ENCODE measurements at regions of chr15 and their contacts with region 1.

Region 1: DNA sequence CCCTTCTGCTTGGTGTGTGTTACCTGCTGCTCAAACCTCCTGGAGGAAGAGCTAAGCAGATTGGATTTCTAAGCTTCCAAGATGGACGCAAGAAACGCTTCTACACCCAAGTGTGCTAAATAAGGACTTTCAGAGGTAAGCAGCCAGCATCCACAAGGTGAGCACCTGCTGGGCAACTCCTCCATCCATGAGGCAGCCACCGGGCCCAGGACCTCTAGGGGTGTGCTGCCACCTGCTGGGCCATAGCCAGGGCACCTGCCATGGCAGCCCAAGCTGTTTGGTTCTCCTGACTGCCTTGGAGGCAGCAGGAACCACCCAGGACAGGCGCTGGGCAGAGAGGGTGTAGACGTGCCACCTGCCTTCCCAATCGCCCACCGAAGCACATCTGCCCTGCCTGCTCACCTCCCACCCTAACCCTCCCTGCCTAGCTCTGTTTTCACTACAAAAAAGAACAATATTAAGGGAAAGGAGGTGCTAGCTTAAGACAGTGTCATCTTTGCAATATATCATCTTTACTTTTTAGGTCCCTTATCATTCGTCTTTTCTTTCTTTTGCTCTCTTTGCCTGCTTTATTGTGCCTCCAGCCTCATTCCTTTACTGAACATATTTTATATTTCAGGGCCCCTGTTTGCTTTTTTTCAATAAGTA is 12.9 kb downstream of the C15orf62 start:
- DNase-seq: peak; percentile 68
- ATAC-seq: peak; percentile 79
- H3K4me3 ChIP-seq: no peak overlapping the region
- H3K27ac ChIP-seq: no peak overlapping the region
- H3K4me1 ChIP-seq: peaks cover 31 to 46% of the 10 kb centered on the region in 2 experiments
- H3K27me3 ChIP-seq: no peaks in the 10 kb centered on the region
- CTCF ChIP-seq: peak; percentile 88 to 95 (median 92)
- POLR2A ChIP-seq: no peak
- RAD21 ChIP-seq: peak; percentile 95

Region 2: DNA sequence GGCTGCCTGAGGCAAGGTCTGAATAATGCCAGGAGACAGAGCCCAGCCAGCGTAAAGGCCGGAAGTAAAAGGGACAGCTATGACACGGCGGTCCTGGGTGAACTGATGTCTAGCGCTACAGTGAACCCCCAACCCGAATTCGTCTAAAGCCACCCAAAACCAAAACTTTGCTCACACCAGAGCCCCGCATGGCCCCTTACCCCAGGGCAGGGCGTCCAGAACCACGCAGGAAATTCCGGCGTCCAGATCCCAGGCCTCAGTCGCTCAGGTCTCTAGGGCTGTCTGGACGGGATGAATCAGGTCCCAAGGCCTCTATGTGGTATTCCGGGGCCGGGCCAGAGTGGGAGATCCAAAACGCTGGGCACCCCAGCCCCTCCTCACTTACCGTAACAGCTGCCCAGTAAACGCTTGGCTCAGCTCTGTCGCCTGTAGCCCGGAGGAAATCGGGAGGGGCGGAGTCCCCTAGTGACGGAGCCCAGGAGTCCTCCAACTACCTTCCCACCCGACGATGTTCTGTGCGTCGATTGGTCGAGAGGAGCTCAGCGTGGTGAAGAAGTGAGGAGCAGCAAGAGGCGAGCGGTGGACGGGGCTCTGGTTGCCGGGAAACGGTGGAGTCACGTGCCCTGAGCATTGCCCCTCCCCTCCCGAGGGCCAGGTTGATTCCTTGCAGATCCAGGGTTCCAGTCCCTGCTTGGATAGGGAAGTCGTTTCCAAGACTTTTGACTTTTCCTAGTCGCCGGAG is 217.9 kb before region 1 on chr15 and contains the start of gene CCDC32:
- CTCF ChIA-PET with region 1: interaction called, 7 read pairs
- POLR2A ChIA-PET with region 1: no interaction called
- RAD21 ChIA-PET with region 1: no interaction called
- intact Hi-C with region 1: loop called (anchors 1 kb)
- DNase-seq: peak; percentile 97
- ATAC-seq: peak; percentile 94
- H3K4me3 ChIP-seq: peak within 1 kb of the TSS; percentile 85 to 87
- H3K27ac ChIP-seq: peak within 1 kb of the TSS; percentile 76
- H3K4me1 ChIP-seq: peaks cover 4 to 35% of the 10 kb centered on the region in 2 experiments; a peak in 3 of 4 replicates
- H3K27me3 ChIP-seq: no peaks in the 10 kb centered on the region
- CTCF ChIP-seq: no peak
- POLR2A ChIP-seq: no peak
- RAD21 ChIP-seq: no peak
- total RNA-seq, gene CCDC32: 18.6 TPM

Region 3: GRCh38 chr15:40684381-40684780 is 98.3 kb before region 1 on chr15:
- CTCF ChIA-PET with region 1: no interaction called
- POLR2A ChIA-PET with region 1: no interaction called
- RAD21 ChIA-PET with region 1: no interaction called
- intact Hi-C with region 1: loop called (anchors 2 kb)
- DNase-seq: no peak
- ATAC-seq: no peak
- H3K4me3 ChIP-seq: no peak overlapping the region
- H3K27ac ChIP-seq: no peak overlapping the region
- H3K4me1 ChIP-seq: no peaks in the 10 kb centered on the region
- H3K27me3 ChIP-seq: no peaks in the 10 kb centered on the region
- CTCF ChIP-seq: no peak
- POLR2A ChIP-seq: no peak
- RAD21 ChIP-seq: no peak

Region 4: GRCh38 chr15:40746916-40747514 is 35.7 kb before region 1 on chr15:
- CTCF ChIA-PET with region 1: interaction called, 12 read pairs
- POLR2A ChIA-PET with region 1: no interaction called
- RAD21 ChIA-PET with region 1: interaction called in 1 of 2 experiments, 4 read pairs
- intact Hi-C with region 1: loop called (anchors 1 kb)
- DNase-seq: no peak
- ATAC-seq: no peak
- H3K4me3 ChIP-seq: no peak overlapping the region
- H3K27ac ChIP-seq: no peak overlapping the region
- H3K4me1 ChIP-seq: no peaks in the 10 kb centered on the region
- H3K27me3 ChIP-seq: no peaks in the 10 kb centered on the region
- CTCF ChIP-seq: no peak
- POLR2A ChIP-seq: no peak
- RAD21 ChIP-seq: no peak

Region 5: DNA sequence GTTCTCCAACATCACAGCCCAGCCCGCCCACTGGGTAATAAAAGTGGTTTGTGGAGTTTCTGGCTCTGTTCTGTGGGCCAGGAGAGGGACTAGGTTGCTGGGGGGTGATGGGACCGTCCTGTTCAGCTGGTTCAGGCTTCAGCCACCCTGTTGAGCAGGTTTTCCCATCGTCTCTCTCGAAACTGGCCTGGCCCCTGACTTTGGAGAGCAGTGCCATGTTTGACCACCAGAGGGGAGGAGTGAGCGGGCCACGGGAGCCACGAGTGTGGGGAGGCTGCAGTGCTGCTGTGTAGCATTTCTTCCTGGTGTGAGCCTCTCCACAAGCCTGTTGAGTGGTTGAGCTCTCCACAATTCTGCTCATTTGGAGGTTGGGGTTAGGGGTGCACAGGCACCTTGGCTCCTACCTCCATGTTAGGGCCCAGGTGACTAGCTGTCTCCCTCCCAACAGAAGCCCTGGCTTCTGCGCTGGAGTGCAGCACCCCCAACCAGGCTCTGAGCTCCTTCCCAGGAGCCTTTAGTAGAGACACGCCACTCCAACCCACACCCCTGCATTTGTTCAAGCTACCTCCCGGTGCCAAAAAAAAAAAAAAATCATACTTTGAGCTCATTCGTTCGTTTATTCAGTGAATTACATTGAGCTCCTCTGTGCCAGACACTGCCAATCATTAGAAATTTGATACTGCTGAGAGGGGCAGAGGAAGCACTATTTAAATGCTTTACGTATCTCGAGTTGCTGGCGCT is 75.1 kb after region 1 on chr15:
- CTCF ChIA-PET with region 1: interaction called, 49 read pairs
- POLR2A ChIA-PET with region 1: interaction called, 9 read pairs
- RAD21 ChIA-PET with region 1: interaction called in 1 of 2 experiments, 4 read pairs
- intact Hi-C with region 1: no loop called
- DNase-seq: no peak
- ATAC-seq: peak; percentile 85
- H3K4me3 ChIP-seq: no peak overlapping the region
- H3K27ac ChIP-seq: peak overlapping the region; percentile 52
- H3K4me1 ChIP-seq: peaks cover 16 to 26% of the 10 kb centered on the region in 2 experiments
- H3K27me3 ChIP-seq: no peaks in the 10 kb centered on the region
- CTCF ChIP-seq: peak; percentile 79 to 99 (median 94)
- POLR2A ChIP-seq: no peak
- RAD21 ChIP-seq: peak; percentile 81

Measured in HCT116 (cell line).